Mammary epithelial cell (primary cell): ENCODE measurements at regions of chr11 and their contacts with region 1.

Region 1: GRCh38 chr11:72141066-72141465 is 5.5 kb downstream of the FOLR3 start:
- DNase-seq: peak; percentile 92
- H3K4me3 ChIP-seq: no peak overlapping the region
- H3K27ac ChIP-seq: peak overlapping the region; percentile 94
- H3K4me1 ChIP-seq: peaks cover 49% of the 10 kb centered on the region
- H3K27me3 ChIP-seq: no peaks in the 10 kb centered on the region
- CTCF ChIP-seq: no peak

Region 2: DNA sequence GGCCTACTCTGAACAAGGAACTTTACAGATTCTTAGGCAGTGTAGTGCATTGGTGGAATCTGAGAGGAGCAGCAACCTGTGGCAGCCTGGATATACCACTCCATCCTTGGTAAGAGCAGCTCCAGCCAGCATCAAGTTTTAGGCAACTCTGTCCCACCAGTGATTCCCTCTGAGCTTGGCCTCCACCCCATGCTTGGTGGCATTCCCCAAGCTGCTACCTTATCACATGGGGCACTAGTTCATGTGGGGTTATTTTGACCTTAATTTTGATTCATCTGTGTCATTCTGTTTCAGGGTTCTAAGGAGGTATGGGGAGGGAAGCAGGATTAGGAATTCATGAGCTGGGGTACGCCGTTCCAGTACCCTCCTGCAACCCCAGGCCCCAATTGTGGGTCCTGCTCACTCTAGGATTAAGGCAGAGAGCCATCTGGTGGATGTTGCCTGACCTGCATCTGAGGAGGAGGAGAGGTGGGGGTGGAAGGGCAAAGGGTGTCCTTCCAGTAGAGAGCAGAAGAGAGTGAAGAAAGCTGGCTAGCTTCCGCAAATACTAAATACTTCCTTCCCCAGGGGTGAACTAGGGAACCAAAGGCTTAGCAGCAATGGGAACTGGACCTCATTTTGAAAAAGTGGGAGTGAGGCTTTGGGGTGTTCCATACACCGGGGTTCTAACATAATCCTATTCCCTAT is 49.9 kb before region 1 on chr11:
- CTCF ChIA-PET with region 1: interaction called, 15 read pairs
- dilution Hi-C with region 1: no loop called
- in situ Hi-C with region 1: no loop called
- intact Hi-C with region 1: no loop called
- DNase-seq: peak; percentile 38
- H3K4me3 ChIP-seq: no peak overlapping the region
- H3K27ac ChIP-seq: no peak overlapping the region
- H3K4me1 ChIP-seq: peaks cover 3% of the 10 kb centered on the region
- H3K27me3 ChIP-seq: no peaks in the 10 kb centered on the region
- CTCF ChIP-seq: peak; percentile 84 to 89

Region 3: DNA sequence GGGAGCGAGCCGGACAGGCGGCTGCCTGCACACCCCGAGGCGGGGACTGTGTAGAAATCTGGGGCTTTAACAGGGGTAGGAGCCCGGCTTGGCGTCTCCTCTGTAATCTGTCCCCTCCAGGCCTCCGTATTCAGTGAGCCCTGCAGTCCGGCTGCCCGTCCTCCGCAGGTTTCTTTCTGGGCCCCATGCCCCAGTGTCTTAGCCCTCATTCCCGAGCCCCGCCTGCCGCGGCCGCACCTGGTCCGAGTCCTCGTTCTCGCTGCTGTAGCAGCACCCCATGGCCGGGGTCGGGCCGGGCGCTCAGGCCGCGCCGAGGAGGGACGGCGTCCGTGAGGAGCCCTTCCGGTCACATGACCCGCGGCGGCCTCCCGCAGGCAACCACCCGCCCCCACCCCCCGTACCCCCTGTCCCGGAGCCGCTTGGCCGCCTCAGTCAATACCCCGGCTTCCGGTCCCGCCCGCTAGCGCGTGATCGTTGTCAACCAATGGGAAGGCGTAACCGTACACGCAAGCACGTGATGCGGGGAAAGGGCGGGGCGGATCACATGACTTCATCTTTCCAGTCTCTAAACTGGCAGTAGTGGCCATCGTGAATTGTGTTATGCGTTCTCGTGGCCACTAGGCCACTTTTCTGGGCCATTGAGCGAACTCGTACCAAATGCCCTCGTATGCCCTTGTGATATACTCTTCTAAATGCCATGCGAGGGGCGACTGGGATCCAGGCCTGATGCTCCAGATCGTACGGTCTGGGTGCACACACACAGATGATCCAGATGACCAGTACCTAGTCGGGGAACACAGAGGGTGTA is 37.9 kb before region 1 on chr11 and contains the start of gene LAMTOR1:
- CTCF ChIA-PET with region 1: interaction called, 4 read pairs
- dilution Hi-C with region 1: no loop called
- in situ Hi-C with region 1: no loop called
- intact Hi-C with region 1: loop called (anchors 1 kb)
- DNase-seq: peak; percentile 95
- H3K4me3 ChIP-seq: peak within 1 kb of the TSS; percentile 80 to 94 (median 84)
- H3K27ac ChIP-seq: peak within 1 kb of the TSS; percentile 86
- H3K4me1 ChIP-seq: peaks cover 31% of the 10 kb centered on the region
- H3K27me3 ChIP-seq: no peaks in the 10 kb centered on the region
- CTCF ChIP-seq: peak; percentile 35 to 40
- total RNA-seq, gene LAMTOR1: 105 to 183 TPM

Region 4: GRCh38 chr11:72112321-72113219 is 28.5 kb before region 1 on chr11 and contains the start of gene ANAPC15:
- CTCF ChIA-PET with region 1: interaction called, 4 read pairs
- dilution Hi-C with region 1: no loop called
- in situ Hi-C with region 1: no loop called
- intact Hi-C with region 1: loop called (anchors 1 kb)
- DNase-seq: peak; percentile 100
- H3K4me3 ChIP-seq: peak within 1 kb of the TSS; percentile 71 to 80 (median 71)
- H3K27ac ChIP-seq: peak within 1 kb of the TSS; percentile 97
- H3K4me1 ChIP-seq: peaks cover 38% of the 10 kb centered on the region
- H3K27me3 ChIP-seq: no peaks in the 10 kb centered on the region
- CTCF ChIP-seq: no peak
- total RNA-seq, gene ANAPC15: 21.7 to 64.8 TPM

Region 5: DNA sequence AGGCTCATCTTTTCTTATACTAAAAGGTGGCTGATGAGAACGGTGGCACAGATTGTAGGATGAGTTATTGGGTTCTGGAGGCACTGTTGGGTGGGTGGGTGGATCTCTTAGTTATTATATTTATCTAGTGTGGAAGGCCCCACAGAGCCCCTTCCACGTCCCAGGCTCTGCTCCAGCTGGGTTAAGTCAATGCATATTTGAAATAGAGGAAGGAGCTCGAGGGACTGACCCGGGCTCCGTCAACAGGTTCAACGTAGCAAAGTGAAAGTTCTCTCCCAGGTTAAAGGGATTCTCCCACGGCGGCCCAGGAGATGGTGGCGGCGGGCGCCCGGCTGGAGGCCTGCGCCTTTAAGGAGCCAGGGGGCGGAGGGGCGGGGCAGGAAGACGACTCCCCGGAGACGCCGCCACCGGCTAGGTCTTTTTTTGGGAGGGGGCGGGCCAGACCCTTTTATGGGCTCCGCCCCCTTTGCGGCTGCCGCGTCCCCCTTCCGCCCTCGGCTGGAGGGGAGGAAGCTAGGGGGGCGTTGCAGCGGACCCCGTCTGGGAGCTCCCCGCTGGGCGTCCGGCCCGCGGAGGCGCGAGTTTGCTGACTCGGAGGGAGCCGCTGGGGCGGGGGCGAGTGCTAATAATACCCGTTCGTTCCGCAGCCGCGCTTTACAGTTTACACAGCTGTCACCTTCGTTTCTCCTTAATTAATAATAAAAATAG is 82.0 kb after region 1 on chr11:
- CTCF ChIA-PET with region 1: no interaction called
- dilution Hi-C with region 1: no loop called
- in situ Hi-C with region 1: no loop called
- intact Hi-C with region 1: loop called (anchors 1 kb)
- DNase-seq: peak; percentile 87
- H3K4me3 ChIP-seq: peak overlapping the region; percentile 81 to 88 (median 85)
- H3K27ac ChIP-seq: peak overlapping the region; percentile 56
- H3K4me1 ChIP-seq: peaks cover 32% of the 10 kb centered on the region
- H3K27me3 ChIP-seq: no peaks in the 10 kb centered on the region
- CTCF ChIP-seq: peak in 1 of 2 donors; percentile 37

Region 6: DNA sequence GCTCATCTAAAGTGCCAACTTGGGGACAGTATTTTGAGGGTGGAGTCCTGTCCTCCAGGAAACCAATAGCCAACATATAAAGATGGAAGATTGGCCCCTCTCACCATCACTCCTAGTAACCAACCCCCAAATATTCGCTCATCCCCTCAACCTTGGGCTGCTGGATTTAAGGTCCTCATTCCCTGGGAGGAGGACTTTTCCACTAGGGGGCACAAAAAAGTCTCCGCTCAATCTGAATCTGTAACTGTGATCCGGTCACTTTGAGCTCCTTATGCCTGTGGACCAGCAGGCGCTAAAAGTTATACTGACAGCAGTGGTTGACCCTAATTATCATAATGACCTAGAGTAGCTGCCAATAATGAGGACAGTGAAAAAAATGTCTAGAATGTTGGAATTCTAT is 313.7 kb after region 1 on chr11:
- CTCF ChIA-PET with region 1: no interaction called
- dilution Hi-C with region 1: no loop called
- in situ Hi-C with region 1: no loop called
- intact Hi-C with region 1: no loop called
- DNase-seq: no peak
- H3K4me3 ChIP-seq: no peak overlapping the region
- H3K27ac ChIP-seq: no peak overlapping the region
- H3K4me1 ChIP-seq: no peaks in the 10 kb centered on the region
- H3K27me3 ChIP-seq: peaks cover 1% of the 10 kb centered on the region
- CTCF ChIP-seq: no peak